Endothelial cell of umbilical vein (primary cell): ENCODE measurements at regions of chr11 and their contacts with region 1.

Region 1: GRCh38 chr11:119594639-119595249 is 134.3 kb downstream of the NECTIN1 start:
- DNase-seq: peak; percentile 70
- H3K4me3 ChIP-seq: no peak overlapping the region
- H3K27ac ChIP-seq: peak overlapping the region; percentile 46
- H3K4me1 ChIP-seq: peaks cover 20% of the 10 kb centered on the region
- H3K27me3 ChIP-seq: no peaks in the 10 kb centered on the region
- CTCF ChIP-seq: no peak
- POLR2A ChIP-seq: no peak

Region 2: DNA sequence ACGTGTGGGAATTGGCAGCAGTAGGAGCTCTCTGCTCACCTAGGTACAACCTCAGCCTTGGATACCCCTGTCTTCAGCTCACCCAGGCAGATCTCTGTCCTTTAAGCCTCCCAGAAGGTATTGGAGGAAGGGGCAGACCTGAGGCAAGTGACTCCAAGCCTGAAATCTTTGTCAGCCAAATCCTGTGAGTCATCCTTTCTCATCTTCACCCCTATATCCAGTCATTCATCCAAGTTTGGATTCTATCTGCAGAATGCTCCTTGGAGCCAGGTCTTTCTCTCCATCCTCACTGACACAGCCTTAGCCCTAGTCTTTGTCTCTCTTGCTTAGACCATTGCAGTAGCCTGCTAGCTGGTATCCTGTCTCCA is 161.4 kb before region 1 on chr11:
- CTCF ChIA-PET with region 1: no interaction called
- POLR2A ChIA-PET with region 1: no interaction called
- dilution Hi-C with region 1: no loop called
- intact Hi-C with region 1: no loop called
- DNase-seq: no peak
- H3K4me3 ChIP-seq: no peak overlapping the region
- H3K27ac ChIP-seq: no peak overlapping the region
- H3K4me1 ChIP-seq: no peaks in the 10 kb centered on the region
- H3K27me3 ChIP-seq: peaks cover 4 to 7% of the 10 kb centered on the region in 2 experiments
- CTCF ChIP-seq: no peak
- POLR2A ChIP-seq: no peak

Region 3: GRCh38 chr11:119584193-119585037 is 10.3 kb before region 1 on chr11:
- CTCF ChIA-PET with region 1: interaction called, 11 read pairs
- POLR2A ChIA-PET with region 1: interaction called, 6 read pairs
- dilution Hi-C with region 1: no loop called
- intact Hi-C with region 1: loop called (anchors 1 kb)
- DNase-seq: peak; percentile 64
- H3K4me3 ChIP-seq: peak overlapping the region; percentile 25 to 41 (median 34)
- H3K27ac ChIP-seq: no peak overlapping the region
- H3K4me1 ChIP-seq: peaks cover 7% of the 10 kb centered on the region
- H3K27me3 ChIP-seq: peaks cover 0 to 4% of the 10 kb centered on the region in 2 experiments
- CTCF ChIP-seq: no peak
- POLR2A ChIP-seq: peak; percentile 33